Astrocyte of the cerebellum (primary cell): ENCODE measurements at regions of chr2 and their contacts with region 1.

Region 1: DNA sequence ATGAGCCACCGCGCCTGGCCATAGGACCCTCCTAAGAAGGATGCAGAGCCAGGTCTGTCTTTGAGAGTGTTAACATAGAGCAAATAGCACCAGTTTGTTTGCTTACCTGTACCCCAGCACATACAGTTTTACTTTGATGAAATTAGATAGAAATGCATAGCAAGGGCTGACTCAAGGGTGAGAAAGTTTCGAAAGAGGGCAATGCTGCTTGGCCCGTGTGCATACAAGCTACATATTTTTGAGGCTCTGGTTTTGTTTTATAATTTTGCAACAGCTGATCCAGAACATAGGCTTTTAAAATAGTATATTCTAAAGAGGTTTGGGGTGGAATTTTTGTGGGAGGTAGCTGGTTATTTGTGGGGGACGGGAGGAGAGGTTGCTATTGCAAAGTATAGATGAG is 151.7 kb downstream of the MCFD2 start:
- DNase-seq: no peak
- H3K4me3 ChIP-seq: no peak overlapping the region
- CTCF ChIP-seq: no peak

Region 2: GRCh38 chr2:46803911-46804670 is 40.2 kb after region 1 on chr2:
- in situ Hi-C with region 1: no loop called
- DNase-seq: peak; percentile 82
- H3K4me3 ChIP-seq: no peak overlapping the region
- CTCF ChIP-seq: no peak

Region 3: GRCh38 chr2:46827632-46828438 is 64.0 kb after region 1 on chr2:
- in situ Hi-C with region 1: loop called (anchors 5 kb)
- DNase-seq: no peak
- H3K4me3 ChIP-seq: no peak overlapping the region
- CTCF ChIP-seq: no peak